ENCODE measurements at regions of chr9 and their contacts with region 1.

Region 1: DNA sequence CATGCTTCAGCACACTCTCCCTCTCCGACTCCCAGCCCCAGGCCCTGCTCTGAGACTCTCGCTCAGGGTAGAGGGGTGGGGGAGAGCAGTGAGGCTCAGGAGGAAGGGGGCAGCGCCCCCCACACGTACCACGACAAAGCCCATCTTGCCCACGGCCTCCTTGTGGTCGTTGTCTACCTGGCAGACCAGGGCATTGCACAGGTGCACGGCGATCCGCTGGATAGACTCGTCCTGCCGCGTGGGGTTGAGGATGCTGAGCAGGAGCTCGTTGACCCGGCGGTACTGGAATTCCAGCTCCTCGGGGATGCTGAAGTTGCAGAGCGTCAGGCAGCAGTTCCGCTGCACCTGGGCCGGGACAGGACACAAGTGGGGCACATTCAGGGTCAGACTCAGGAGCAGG is 18.5 kb upstream of the ZDHHC12 start:
- DNase-seq: no peak
- ATAC-seq: no peak
- H3K4me3 ChIP-seq: no peak overlapping the region
- H3K27ac ChIP-seq: no peak overlapping the region
- H3K4me1 ChIP-seq: no peaks in the 10 kb centered on the region
- H3K27me3 ChIP-seq: no peaks in the 10 kb centered on the region
- CTCF ChIP-seq: no peak
- POLR2A ChIP-seq: no peak
- RAD21 ChIP-seq: no peak

Region 2: DNA sequence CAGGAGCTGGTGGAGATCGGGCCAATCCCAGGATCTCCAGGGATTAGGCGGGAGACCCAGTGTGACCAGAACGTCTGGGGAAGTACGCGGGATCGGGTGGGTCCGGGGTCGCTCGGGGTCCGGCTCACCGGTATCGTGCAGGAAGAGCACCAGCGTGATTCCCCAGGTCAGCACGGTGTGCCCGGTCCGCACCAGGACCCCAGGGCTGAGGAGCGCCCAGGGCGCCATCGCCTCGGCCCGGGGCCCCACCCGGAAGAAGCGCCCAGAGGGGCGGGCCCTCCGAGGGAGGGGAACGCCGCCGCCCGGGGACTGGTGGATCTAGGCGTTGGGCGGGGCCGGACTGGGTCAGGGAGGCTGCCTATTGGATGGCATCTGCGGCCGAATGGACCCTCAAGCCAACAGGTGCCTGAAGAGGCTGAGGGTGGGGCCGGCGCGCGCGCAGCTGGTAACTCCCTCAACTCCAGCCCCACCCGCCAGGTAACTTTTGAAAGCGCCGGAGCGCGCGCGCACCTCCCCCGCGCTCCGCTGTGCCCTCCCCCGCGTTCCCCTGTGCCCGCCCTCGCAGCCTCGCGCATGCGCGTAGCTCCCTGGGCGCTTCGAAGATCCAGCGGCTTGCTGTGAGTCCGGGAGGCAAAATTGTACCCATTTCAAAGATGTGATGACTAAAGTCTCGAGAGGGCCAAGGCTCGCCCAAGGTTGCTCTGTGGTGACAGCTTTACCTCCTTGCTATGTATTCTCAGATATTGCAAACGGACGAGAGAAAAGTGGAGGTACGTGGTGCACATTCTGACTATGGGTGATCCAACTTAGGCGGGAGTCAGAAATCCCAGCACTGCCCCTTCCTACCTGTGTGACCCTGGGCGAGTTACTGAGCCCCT is 18.3 kb before region 1 on chr9 and contains the start of gene ZDHHC12:
- CTCF ChIA-PET with region 1: no interaction called
- POLR2A ChIA-PET with region 1: no interaction called
- dilution Hi-C with region 1: no loop called
- in situ Hi-C with region 1: no loop called
- intact Hi-C with region 1: no loop called
- DNase-seq: peak; percentile 88
- ATAC-seq: peak; percentile 99
- H3K4me3 ChIP-seq: peak within 1 kb of the TSS; percentile 56
- H3K27ac ChIP-seq: no peak within 1 kb of the TSS; the same call in 1 of the 2 replicates
- H3K4me1 ChIP-seq: peaks cover 4% of the 10 kb centered on the region; the same call in 1 of the 2 replicates
- H3K27me3 ChIP-seq: no peaks in the 10 kb centered on the region
- CTCF ChIP-seq: no peak
- POLR2A ChIP-seq: peak; percentile 21; the same call in 1 of the 2 replicates
- RAD21 ChIP-seq: no peak
- total RNA-seq, gene ZDHHC12: 13.9 and 16.7 TPM in 2 replicates

Region 3: GRCh38 chr9:128764361-128764760 is 22.0 kb after region 1 on chr9:
- CTCF ChIA-PET with region 1: no interaction called
- POLR2A ChIA-PET with region 1: interaction called, 16 read pairs
- dilution Hi-C with region 1: no loop called
- in situ Hi-C with region 1: no loop called
- intact Hi-C with region 1: no loop called
- DNase-seq: no peak
- ATAC-seq: no peak
- H3K4me3 ChIP-seq: no peak overlapping the region
- H3K27ac ChIP-seq: no peak overlapping the region
- H3K4me1 ChIP-seq: no peaks in the 10 kb centered on the region
- H3K27me3 ChIP-seq: no peaks in the 10 kb centered on the region
- CTCF ChIP-seq: no peak
- POLR2A ChIP-seq: no peak
- RAD21 ChIP-seq: no peak